ENCODE measurements at regions of chrX and their contacts with region 1.

Region 1: DNA sequence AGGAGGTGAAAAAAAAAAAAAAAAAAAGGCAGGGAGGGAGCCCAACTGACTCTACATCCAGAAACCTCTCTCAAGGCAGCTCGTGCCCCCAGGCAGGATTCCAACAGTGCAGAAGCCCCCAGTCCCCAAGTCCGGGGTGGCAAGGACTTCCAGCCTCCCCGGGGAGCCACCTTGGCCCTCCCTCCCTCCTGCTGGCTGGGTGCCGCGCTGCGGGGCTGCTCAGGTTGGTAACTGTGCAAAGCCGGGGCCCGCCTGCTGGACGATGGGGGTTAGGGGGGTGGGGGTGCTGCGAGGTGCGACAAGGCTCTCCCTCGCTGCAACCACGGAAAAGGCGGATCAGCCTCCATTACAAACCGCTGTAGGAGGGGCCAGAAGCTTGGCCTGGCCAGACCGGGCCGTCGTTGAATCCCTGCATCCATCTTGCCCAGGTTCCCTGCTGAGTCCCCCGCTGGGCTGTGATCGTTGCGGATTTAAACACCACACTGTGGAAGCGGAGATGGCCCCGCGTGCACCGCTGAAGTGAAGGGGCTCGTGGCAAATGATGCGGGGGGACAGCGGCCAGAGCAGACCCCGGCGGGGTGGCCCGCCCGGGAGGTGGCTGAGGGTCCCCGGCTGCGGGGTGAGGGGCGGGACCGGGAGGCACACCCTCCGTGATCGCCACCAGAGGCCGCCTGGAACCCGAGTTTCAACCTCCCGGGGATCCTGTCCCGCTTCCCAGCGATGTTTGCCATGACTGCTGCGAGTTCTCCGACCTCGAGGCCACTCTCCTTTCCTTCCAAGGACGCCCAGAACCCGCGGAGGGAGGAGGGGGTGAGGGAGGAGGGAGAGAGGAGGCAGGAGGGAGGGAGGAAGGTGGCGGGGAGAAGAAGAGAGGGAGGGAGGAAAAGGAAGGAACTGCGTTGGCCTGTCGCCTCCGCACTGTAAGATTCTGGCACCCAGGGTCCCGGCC is 58.0 kb upstream of the DDX3X start:
- DNase-seq: peak; percentile 73
- ATAC-seq: peak; percentile 80
- H3K4me3 Mint-ChIP-seq: peak overlapping the region; percentile 64
- H3K27ac Mint-ChIP-seq: peak overlapping the region; percentile 70
- H3K4me1 Mint-ChIP-seq: peaks cover 4% of the 10 kb centered on the region
- H3K27me3 Mint-ChIP-seq: no peaks in the 10 kb centered on the region

Region 2: DNA sequence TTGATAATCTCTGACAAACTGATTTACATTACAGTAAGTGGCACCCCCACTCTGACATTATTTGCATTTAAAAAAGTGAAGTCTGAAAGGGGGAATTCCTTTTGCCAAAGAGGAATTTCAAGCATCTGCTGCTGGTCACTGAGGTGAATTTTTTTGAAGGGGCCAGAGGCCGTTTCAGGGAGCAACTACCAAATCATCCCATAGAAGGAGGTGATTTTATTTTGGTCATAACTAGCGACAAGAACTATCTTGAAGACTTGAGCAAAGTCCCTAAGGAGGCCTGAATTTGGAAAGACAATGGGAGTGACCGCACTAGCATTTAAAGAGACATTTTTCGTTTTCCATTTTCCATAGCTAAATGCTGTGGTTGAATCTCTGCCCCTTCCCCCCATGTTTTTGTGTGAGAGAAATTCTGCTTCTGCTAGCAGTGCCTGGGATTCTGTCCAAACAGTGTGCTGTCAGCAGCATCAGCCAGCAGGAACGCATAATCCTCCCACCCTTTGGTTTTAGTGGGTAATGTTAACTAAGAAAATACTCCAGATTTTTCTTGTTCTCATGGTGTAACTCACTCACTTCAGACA is 430.5 kb before region 1 on chrX:
- CTCF ChIA-PET with region 1: no interaction called
- POLR2A ChIA-PET with region 1: no interaction called
- intact Hi-C with region 1: no loop called
- DNase-seq: no peak
- ATAC-seq: no peak
- H3K4me3 Mint-ChIP-seq: no peak overlapping the region
- H3K27ac Mint-ChIP-seq: no peak overlapping the region
- H3K4me1 Mint-ChIP-seq: no peaks in the 10 kb centered on the region
- H3K27me3 Mint-ChIP-seq: no peaks in the 10 kb centered on the region

Region 3: GRCh38 chrX:41224606-41225005 is 51.3 kb before region 1 on chrX:
- CTCF ChIA-PET with region 1: no interaction called
- POLR2A ChIA-PET with region 1: no interaction called
- intact Hi-C with region 1: no loop called
- DNase-seq: no peak
- ATAC-seq: no peak
- H3K4me3 Mint-ChIP-seq: no peak overlapping the region
- H3K27ac Mint-ChIP-seq: no peak overlapping the region
- H3K4me1 Mint-ChIP-seq: no peaks in the 10 kb centered on the region
- H3K27me3 Mint-ChIP-seq: no peaks in the 10 kb centered on the region

Region 4: DNA sequence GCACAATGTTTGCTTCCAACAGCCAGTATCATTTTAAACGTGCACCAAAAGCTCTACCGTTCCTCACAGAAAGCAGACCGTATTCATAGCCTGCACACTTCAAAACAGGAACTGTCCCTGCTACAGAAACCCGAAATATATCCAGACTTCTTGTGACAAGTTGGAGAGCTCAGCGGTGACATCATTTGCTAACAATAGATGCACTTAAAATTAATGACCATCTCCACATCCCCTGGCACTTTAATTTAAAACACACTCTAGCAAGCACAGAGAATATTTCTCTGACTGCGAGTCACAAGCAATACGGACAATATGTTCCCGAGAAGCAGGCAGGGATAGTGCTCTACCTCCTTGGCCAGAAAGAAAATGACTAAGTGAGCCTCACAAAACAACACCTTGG is 173.7 kb after region 1 on chrX:
- CTCF ChIA-PET with region 1: interaction called, 4 read pairs
- POLR2A ChIA-PET with region 1: no interaction called
- intact Hi-C with region 1: loop called (anchors 2 to 5 kb)
- DNase-seq: no peak
- ATAC-seq: peak; percentile 80
- H3K4me3 Mint-ChIP-seq: peak overlapping the region; percentile 28
- H3K27ac Mint-ChIP-seq: peak overlapping the region; percentile 33
- H3K4me1 Mint-ChIP-seq: peaks cover 15% of the 10 kb centered on the region
- H3K27me3 Mint-ChIP-seq: no peaks in the 10 kb centered on the region

Region 5: DNA sequence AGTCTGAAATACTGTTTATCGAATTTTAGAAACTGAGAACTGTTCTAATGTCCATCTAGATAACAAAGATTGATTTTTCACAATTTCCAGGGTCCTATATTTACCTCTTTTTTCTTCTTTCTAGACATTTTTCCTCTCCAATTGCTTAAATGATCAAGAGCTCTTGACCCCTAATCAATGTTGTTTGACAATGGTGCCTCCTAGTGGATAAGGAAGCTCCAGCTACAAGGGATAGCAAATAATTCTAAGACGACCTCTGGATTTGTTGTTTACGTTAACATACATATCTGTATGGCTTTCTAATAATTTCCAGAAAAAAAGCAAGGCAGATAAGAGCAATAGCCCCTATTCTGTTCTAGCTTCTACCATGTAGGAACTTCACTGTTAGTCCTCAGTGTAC is 483.9 kb after region 1 on chrX:
- CTCF ChIA-PET with region 1: no interaction called
- POLR2A ChIA-PET with region 1: no interaction called
- intact Hi-C with region 1: loop called in 1 of 2 experiments (anchors 10 kb)
- DNase-seq: no peak
- ATAC-seq: no peak
- H3K4me3 Mint-ChIP-seq: no peak overlapping the region
- H3K27ac Mint-ChIP-seq: no peak overlapping the region
- H3K4me1 Mint-ChIP-seq: peaks cover 3% of the 10 kb centered on the region
- H3K27me3 Mint-ChIP-seq: no peaks in the 10 kb centered on the region

Measured in activated CD4-positive, alpha-beta T cell treated with anti-CD3 and anti-CD28 coated beads for 36 hours (primary cell).